H1 (cell line): ENCODE measurements at regions of chr16 and their contacts with region 1.

Region 1: GRCh38 chr16:69112285-69113129 is 7.1 kb downstream of the HAS3 start:
- DNase-seq: peak in 1 of 2 experiments; percentile 90
- H3K4me3 ChIP-seq: no peak overlapping the region
- H3K27ac ChIP-seq: no peak overlapping the region; the same call in 1 of the 2 replicates
- H3K4me1 ChIP-seq: peaks cover 4 to 17% (median 12%) of the 10 kb centered on the region in 4 experiments
- H3K27me3 ChIP-seq: no peaks in the 10 kb centered on the region
- CTCF ChIP-seq: peak; percentile 88 to 94 (median 91)
- EP300 ChIP-seq: no peak
- POLR2A ChIP-seq: peak in 1 of 2 experiments; percentile 43; a peak in 1 of 3 replicates
- RAD21 ChIP-seq: peak; percentile 64 to 82

Region 2: DNA sequence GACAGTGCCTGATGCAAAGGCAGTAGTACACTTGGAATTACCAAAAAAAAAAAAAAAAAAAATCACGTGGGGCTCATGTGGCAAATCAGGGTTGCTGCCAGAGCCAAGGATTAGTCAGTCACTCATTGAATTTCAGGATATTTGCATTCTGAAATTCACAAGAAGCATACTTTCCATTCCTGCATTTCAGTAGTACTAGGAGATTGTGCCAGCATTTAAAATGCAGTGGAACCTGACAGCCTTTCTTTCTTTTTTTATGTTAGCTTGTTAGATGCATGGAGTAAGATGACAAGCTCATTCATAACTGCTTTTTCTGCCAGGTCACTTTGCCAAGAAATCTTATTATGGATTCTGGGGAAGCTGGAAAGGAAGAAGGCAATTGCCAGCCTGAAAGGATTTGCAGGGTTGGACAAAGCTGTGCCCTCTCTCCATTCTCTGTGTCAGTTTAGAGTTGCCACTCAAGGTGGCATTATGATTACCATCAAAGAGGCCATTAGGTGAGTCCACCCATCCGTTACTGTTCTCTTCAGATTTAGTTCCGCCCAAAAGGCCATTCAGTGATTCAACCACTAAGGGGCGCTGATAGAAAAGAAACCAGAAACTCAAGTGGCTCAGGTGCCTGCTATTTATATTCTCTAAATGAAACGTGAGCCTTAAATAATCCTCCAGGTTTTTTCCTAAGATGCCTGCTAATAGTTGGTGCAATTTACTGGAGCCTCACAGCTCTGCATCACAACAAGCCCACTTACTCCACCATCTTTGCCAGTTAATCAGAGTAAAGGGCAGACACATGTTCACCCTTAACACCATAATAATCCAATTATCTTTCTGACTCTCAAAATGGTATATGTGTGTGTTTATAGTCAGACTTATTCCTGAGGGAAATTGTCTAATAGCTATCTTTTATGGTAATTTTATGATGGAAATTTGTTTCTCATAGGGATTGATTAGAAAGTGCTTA is 210.2 kb before region 1 on chr16:
- CTCF ChIA-PET with region 1: interaction called, 29 read pairs
- POLR2A ChIA-PET with region 1: no interaction called
- DNase-seq: peak in 1 of 2 experiments; percentile 63
- H3K4me3 ChIP-seq: no peak overlapping the region
- H3K27ac ChIP-seq: no peak overlapping the region
- H3K4me1 ChIP-seq: 0 out of 7 replicates have a peak, but pooled peaks cover 0 to 1% (median 0%) of the 10 kb centered on the region in 4 experiments
- H3K27me3 ChIP-seq: no peaks in the 10 kb centered on the region
- CTCF ChIP-seq: peak in 2 of 3 experiments; percentile 74 to 86; a peak in 3 of 4 replicates
- EP300 ChIP-seq: no peak
- POLR2A ChIP-seq: no peak
- RAD21 ChIP-seq: peak; percentile 96 to 98

Region 3: GRCh38 chr16:68987734-68988457 is 124.6 kb before region 1 on chr16:
- CTCF ChIA-PET with region 1: interaction called, 30 read pairs
- POLR2A ChIA-PET with region 1: interaction called, 23 read pairs
- DNase-seq: no peak
- H3K4me3 ChIP-seq: no peak overlapping the region
- H3K27ac ChIP-seq: no peak overlapping the region
- H3K4me1 ChIP-seq: peaks cover 0 to 9% (median 5%) of the 10 kb centered on the region in 4 experiments; a peak in 2 of 7 replicates
- H3K27me3 ChIP-seq: no peaks in the 10 kb centered on the region
- CTCF ChIP-seq: no peak
- EP300 ChIP-seq: no peak
- POLR2A ChIP-seq: no peak
- RAD21 ChIP-seq: no peak; a peak in 1 of 4 replicates

Region 4: DNA sequence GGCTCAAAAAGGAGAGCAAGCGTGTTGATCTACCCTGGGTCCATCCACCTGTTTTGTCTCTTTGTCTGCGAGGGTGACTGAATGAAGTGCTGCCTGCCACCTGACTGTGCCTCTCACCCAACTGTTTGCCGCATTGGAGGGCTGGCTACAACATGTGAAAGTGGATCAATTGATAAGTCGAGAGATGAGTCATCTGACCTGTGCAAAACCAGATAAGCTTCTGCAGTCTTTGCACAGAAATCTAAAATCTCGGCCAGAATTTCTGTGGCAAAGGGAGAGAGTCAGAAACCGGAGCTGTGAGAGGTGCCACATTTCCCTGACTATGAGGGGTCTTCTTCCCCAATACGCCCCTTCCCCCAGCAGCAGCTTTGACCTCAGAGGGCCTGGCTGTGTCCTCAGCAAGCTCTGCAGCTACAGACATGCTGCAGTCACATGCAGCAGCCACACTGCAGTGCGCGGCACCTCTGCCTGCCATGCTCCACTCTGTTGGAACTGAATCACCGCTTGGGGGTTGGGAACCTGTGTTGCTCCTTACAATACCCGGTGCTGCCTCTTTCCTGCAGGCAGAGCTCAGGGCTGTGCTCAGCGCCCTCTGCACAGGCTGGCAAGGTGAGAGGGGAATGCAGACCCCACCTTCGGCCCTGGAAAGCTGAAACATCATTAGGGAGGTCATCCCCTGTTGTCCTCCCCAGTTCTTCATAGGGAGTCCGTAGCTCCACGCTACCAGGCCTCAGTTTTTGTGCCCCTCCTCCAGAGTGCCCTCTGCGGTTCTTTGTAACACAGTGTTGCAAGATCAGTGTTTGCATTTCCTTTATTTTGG is 23.2 kb before region 1 on chr16:
- CTCF ChIA-PET with region 1: interaction called, 13 read pairs
- POLR2A ChIA-PET with region 1: interaction called, 15 read pairs
- DNase-seq: no peak
- H3K4me3 ChIP-seq: no peak overlapping the region
- H3K27ac ChIP-seq: no peak overlapping the region
- H3K4me1 ChIP-seq: peaks cover 9 to 17% (median 10%) of the 10 kb centered on the region in 4 experiments
- H3K27me3 ChIP-seq: no peaks in the 10 kb centered on the region
- CTCF ChIP-seq: no peak
- EP300 ChIP-seq: no peak
- POLR2A ChIP-seq: no peak
- RAD21 ChIP-seq: peak in 1 of 2 experiments; percentile 4; a peak in 1 of 4 replicates

Region 5: GRCh38 chr16:69100071-69100691 is 12.3 kb before region 1 on chr16:
- CTCF ChIA-PET with region 1: interaction called, 19 read pairs
- POLR2A ChIA-PET with region 1: interaction called, 38 read pairs
- DNase-seq: no peak
- H3K4me3 ChIP-seq: no peak overlapping the region
- H3K27ac ChIP-seq: no peak overlapping the region
- H3K4me1 ChIP-seq: peaks cover 15 to 27% (median 19%) of the 10 kb centered on the region in 4 experiments
- H3K27me3 ChIP-seq: no peaks in the 10 kb centered on the region; a peak in 1 of 7 replicates
- CTCF ChIP-seq: no peak
- EP300 ChIP-seq: no peak
- POLR2A ChIP-seq: no peak
- RAD21 ChIP-seq: no peak

Region 6: DNA sequence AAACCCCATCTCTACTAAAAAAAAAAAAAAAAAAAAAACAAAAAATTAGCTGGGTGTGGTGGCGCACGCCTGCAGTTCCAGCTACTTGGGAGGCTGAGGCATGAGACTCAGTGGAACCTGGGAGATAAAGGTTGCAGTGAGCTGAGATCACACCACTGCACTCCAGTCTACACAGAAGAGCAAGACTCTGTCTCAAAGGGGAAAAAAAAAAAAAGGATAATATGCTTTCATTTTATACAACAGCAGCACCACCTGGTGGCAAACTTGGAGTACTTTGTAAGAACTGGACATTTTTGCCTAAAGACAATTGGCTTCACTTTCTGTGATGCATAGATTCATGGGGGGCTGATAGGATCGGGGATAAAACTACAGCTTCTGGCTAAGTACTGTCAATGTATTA is 11.4 kb after region 1 on chr16:
- CTCF ChIA-PET with region 1: interaction called, 174 read pairs
- POLR2A ChIA-PET with region 1: interaction called, 38 read pairs
- DNase-seq: no peak
- H3K4me3 ChIP-seq: no peak overlapping the region
- H3K27ac ChIP-seq: no peak overlapping the region
- H3K4me1 ChIP-seq: no peaks in the 10 kb centered on the region
- H3K27me3 ChIP-seq: no peaks in the 10 kb centered on the region
- CTCF ChIP-seq: peak in 2 of 3 experiments; percentile 68; a peak in 3 of 4 replicates
- EP300 ChIP-seq: no peak
- POLR2A ChIP-seq: no peak
- RAD21 ChIP-seq: peak; percentile 81 to 85

Region 7: DNA sequence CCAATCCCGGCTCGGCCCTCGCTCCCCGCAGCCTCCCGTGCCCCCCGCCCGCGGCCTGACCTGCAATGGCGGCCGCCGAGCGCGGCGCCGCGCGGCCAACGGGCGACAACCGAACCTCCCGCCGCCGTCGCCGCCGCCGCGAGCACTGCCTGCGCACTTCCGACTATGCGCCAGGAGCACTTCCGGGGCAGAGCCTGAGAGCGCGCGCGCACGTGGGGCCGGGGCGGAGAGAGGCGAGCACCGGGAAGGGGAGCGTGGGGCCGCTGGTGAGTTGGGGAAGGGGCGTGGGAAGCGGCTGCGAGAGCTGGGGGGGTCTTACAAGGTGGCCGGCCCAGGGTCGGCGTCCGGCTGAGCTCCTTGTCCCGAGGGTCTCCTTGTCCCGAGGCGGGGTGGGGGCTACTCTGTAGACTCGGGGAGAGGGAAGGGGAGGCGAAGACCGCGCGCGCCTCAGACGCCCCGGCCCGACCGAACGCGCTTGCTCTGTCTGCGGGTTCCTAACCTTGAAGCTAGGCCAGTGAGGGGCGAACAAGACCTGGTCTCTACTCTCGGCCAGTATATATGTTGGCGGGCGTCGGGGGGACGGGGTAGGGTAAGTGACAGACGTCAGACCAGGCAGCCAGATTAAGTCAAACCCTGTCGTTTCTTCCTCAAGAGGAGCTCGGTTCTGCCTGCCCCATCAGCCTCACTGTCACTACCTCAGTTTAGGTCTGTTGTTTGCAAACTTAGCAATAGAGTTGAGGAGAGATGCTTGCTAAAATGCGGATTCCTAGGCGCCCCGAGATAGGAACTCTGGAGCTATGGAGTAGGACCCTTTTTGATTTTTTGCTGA is 20.1 kb after region 1 on chr16 and contains the starts of genes CHTF8 and UTP4:
- CTCF ChIA-PET with region 1: interaction called, 174 read pairs
- POLR2A ChIA-PET with region 1: interaction called, 17 read pairs
- DNase-seq: no peak
- H3K4me3 ChIP-seq: peak within 1 kb of the TSS; percentile 90 to 97 (median 94)
- H3K27ac ChIP-seq: peak within 1 kb of the TSS; percentile 94
- H3K4me1 ChIP-seq: peaks cover 2 to 12% (median 7%) of the 10 kb centered on the region in 4 experiments; a peak in 5 of 7 replicates
- H3K27me3 ChIP-seq: no peaks in the 10 kb centered on the region
- CTCF ChIP-seq: no peak
- EP300 ChIP-seq: no peak; a peak in 1 of 3 replicates
- POLR2A ChIP-seq: peak; percentile 76 to 83
- RAD21 ChIP-seq: no peak
- total RNA-seq, gene CHTF8: 138 and 146 TPM in 2 replicates
- total RNA-seq, gene UTP4: 101 TPM in 2 replicates

Region 8: DNA sequence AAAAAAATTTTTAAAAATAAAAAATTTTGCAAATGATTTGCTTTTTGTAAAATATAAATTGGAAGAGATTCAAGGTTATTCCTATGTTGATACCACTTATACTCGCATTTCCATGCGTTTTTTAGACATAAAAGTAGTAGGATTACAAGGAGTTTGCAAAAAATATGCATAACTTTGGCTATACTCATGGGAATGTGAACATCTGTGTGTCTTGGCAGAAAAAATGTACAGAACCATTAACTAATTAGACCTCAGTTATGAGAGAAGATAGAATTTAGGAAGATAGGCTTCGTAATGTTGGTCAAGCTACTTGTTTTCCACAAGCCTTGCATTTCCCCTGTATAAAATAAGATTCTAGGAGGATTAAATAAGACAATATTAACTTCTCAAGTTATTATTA is 137.6 kb after region 1 on chr16:
- CTCF ChIA-PET with region 1: no interaction called
- POLR2A ChIA-PET with region 1: no interaction called
- DNase-seq: no peak
- H3K4me3 ChIP-seq: no peak overlapping the region
- H3K27ac ChIP-seq: no peak overlapping the region
- H3K4me1 ChIP-seq: no peaks in the 10 kb centered on the region
- H3K27me3 ChIP-seq: no peaks in the 10 kb centered on the region
- CTCF ChIP-seq: no peak
- EP300 ChIP-seq: no peak
- POLR2A ChIP-seq: no peak
- RAD21 ChIP-seq: no peak